A673 (cell line): ENCODE measurements at regions of chr15 and their contacts with region 1.

Region 1: GRCh38 chr15:74373731-74374647 is 6.5 kb upstream of the CYP11A1 start:
- DNase-seq: peak; percentile 95
- H3K4me3 ChIP-seq: peak overlapping the region; percentile 53
- H3K27ac ChIP-seq: no peak overlapping the region
- H3K4me1 ChIP-seq: peaks cover 7% of the 10 kb centered on the region
- H3K27me3 ChIP-seq: peaks cover 28% of the 10 kb centered on the region
- CTCF ChIP-seq: peak; percentile 93

Region 2: GRCh38 chr15:74438721-74439316 is 64.8 kb after region 1 on chr15:
- CTCF ChIA-PET with region 1: interaction called, 6 read pairs
- POLR2A ChIA-PET with region 1: no interaction called
- intact Hi-C with region 1: loop called (anchors 2 kb)
- DNase-seq: peak; percentile 75
- H3K4me3 ChIP-seq: no peak overlapping the region
- H3K27ac ChIP-seq: no peak overlapping the region
- H3K4me1 ChIP-seq: peaks cover 4% of the 10 kb centered on the region
- H3K27me3 ChIP-seq: no peaks in the 10 kb centered on the region
- CTCF ChIP-seq: peak; percentile 94

Region 3: DNA sequence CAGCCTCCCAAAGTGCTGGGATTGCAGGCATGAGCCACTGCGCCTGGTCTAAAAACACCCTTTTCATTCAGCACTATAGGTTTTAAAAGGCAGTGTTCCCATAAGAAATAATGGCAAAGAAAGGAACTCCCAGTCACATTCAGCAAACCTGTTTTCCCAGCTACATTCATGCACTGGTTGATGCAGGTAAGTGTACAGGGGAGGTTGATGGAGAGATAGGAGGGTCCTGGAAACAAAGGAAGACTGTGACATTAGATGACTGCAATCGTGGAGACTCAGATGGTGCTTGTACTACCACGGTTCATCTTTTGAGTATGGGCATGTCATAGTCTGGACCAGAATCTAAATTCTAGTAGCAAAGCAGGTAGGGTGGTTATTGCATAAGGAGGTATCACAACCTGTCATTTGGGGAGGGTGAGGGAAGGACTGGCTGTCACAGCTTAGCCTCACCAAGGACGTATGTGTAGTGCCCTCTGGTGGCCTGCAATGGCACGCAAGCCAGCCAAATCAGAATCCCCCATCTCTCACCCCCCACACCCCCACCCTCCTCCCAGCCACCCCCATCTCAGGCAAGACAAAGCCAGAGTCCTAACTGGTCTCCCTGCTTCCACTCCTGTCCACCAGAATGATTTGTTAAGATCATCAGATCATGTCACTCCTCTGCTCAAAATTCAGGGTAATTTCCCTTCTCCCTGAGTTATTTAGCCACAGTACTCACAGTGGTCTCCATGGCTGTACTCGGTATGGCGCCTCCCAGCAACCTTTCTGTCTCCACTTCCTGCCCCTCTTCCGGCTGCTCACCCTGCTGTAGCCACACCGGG is 115.7 kb after region 1 on chr15:
- CTCF ChIA-PET with region 1: no interaction called
- POLR2A ChIA-PET with region 1: no interaction called
- intact Hi-C with region 1: loop called (anchors 2 kb)
- DNase-seq: peak; percentile 64
- H3K4me3 ChIP-seq: no peak overlapping the region
- H3K27ac ChIP-seq: no peak overlapping the region
- H3K4me1 ChIP-seq: no peaks in the 10 kb centered on the region
- H3K27me3 ChIP-seq: no peaks in the 10 kb centered on the region
- CTCF ChIP-seq: peak; percentile 77

Region 4: DNA sequence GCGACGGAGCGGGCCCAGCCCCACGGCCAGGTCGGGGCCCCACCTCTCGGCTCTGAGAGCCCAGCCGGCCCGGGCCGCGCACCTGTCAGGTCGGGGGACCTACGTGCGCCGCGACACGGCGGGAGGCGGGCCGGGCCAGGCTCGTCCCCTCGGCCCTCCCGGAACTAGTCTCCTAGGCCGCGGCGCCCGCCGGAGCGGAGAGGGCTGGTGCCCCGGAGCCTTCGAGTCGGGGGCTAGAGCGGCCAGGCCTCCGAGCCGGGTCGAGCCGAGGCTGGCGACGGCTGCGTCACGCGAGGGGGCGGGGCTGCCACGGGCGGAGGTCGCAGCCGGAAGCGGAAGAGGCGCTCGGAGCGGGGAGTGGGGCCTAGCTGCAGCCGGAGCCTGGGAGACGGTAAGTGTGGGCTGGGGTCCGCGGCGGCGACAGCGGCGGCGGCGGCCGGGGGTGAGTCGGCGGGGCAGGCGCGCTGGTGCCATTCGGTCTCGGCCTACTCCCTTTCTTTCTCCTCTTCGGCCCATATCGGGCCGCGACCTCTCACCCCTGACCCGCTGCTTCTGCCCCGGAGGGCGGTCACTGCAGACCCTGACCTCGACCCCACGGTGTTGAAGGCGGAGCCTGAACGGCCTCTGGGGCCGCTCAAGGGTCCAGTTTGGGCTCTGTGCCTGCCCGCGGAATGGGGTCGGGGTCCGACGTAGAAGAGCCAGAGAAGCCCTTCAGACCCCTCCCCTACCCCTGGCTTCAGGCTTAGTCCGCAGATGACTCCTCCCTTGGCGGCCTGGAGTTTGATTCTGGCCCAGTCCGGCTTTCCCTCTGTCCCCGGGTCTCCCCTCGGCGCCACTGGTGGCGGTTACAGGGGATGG is 241.7 kb after region 1 on chr15 and contains the start of gene CLK3:
- CTCF ChIA-PET with region 1: no interaction called
- POLR2A ChIA-PET with region 1: no interaction called
- intact Hi-C with region 1: loop called (anchors 5 kb)
- DNase-seq: peak; percentile 98
- H3K4me3 ChIP-seq: peak within 1 kb of the TSS; percentile 69
- H3K27ac ChIP-seq: peak within 1 kb of the TSS; percentile 97
- H3K4me1 ChIP-seq: peaks cover 13% of the 10 kb centered on the region
- H3K27me3 ChIP-seq: no peaks in the 10 kb centered on the region
- CTCF ChIP-seq: no peak
- total RNA-seq, gene CLK3: 66.8 and 75.5 TPM in 2 replicates

Region 5: GRCh38 chr15:74635228-74635627 is 261.2 kb after region 1 on chr15:
- CTCF ChIA-PET with region 1: no interaction called
- POLR2A ChIA-PET with region 1: no interaction called
- intact Hi-C with region 1: loop called (anchors 2 kb)
- DNase-seq: peak; percentile 78
- H3K4me3 ChIP-seq: no peak overlapping the region
- H3K27ac ChIP-seq: no peak overlapping the region
- H3K4me1 ChIP-seq: no peaks in the 10 kb centered on the region
- H3K27me3 ChIP-seq: no peaks in the 10 kb centered on the region
- CTCF ChIP-seq: peak; percentile 92